RWPE1 (cell line): ENCODE measurements at regions of chr12 and their contacts with region 1.

Region 1: DNA sequence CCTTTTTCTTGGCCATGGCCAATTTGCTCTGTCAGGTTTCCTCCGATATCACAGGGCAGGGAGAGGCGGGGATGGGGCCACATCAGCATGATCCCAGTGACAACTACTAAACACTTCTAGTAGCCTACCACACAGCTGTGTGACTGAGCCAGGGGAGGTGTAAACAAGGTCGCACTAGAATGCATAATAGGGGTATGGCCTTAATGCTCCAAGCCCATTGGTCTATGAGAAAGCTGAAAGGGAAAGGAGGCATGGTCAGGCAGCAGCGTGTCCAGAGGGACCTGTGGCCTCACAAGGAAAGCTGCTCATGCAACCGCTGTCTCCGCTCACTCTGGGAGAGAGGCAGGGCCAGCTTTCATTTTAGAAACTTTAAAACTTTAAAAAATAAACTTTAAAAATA is 27.5 kb upstream of the ACTR6 start:
- DNase-seq: no peak
- H3K27ac ChIP-seq: no peak overlapping the region
- CTCF ChIP-seq: no peak

Region 2: DNA sequence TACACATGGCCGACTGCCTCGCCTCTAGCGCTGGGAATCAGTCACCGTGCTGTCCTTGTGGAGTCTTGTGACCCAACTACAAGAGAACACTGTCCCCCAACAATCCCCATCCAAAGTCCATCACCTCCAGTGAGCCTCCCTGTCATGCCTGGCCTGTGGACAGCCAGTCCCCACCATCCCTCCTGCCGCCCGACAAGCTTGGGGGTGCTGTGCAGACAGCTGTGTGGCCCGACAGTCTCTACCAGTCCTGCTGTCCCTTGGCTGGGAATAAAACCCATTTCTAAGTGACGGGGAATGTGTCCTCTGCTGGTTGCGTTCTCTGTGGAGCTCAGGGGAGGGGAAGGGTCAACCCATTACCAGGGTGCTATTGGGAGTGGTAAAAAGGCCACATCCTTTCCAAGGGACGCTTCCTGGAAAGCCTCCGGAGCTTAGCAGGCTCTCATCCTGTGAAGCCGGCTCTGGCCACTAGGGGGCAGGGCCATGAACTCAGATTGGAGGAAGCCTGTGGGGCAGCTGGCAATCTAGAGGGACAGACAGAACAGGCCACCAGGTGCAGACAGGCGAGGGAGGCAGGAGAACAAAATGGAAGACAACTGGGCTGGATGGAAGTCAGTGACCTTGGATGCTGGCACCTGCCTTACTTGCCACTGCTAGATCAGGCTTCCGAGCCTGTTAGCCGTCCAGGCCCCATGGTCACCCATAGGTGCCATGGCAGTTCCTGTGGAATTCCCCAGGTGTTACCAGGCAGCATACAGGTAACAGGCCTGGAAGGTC is 18.4 kb before region 1 on chr12:
- CTCF ChIA-PET with region 1: interaction called, 10 read pairs
- POLR2A ChIA-PET with region 1: no interaction called
- DNase-seq: peak; percentile 38
- H3K27ac ChIP-seq: no peak overlapping the region
- CTCF ChIP-seq: peak; percentile 82